ENCODE measurements at regions of chr11 and their contacts with region 1.

Region 1: DNA sequence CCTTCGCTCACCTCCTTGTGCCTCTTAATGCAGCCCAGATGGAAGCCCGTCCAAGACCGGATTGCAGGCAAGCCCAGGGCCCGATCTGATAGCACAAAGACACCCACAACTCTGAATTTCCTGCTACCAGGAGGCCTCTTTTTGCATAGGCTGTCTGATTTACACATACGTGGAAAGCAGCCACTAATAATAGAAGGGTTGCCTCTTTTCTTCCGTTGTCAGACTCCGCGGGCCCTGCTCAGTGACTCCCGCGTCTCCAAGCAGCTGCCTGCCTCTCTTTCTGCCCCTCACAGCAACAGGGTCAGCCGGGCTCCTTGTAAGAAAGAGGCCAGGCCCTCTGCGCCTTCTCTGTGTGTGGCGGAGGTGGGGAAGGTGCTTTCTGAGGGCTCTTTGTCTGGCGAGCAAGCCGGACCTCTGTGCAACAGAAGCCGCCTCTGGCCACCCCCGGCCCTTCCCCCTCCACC is 26.7 kb downstream of the FLI1 start:
- DNase-seq: peak; percentile 57
- H3K4me3 Mint-ChIP-seq: peak overlapping the region; percentile 66
- H3K27ac Mint-ChIP-seq: peak overlapping the region; percentile 83
- H3K4me1 Mint-ChIP-seq: peaks cover 99% of the 10 kb centered on the region
- H3K27me3 Mint-ChIP-seq: no peaks in the 10 kb centered on the region

Region 2: DNA sequence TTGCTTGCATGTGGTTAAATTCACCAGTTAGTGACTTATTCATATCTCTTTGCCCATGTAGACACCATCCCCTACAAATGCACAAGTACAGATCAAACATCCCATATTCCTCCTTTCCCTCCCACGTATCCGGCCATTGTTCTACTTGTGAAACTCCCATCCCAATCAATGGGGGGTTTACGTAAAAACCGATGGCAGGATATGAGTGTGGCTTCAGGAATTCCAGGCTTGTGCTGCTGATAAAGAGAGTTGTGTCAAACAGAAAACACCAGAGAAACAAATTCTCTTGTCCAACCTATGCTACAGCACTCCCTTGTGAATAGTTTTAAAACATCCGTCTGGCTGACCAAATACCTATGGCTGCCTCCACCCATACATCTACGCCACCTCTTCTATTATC is 11.2 kb before region 1 on chr11:
- CTCF ChIA-PET with region 1: no interaction called
- POLR2A ChIA-PET with region 1: interaction called, 17 read pairs
- DNase-seq: no peak
- H3K4me3 Mint-ChIP-seq: no peak overlapping the region
- H3K27ac Mint-ChIP-seq: no peak overlapping the region
- H3K4me1 Mint-ChIP-seq: peaks cover 81% of the 10 kb centered on the region
- H3K27me3 Mint-ChIP-seq: no peaks in the 10 kb centered on the region

Region 3: DNA sequence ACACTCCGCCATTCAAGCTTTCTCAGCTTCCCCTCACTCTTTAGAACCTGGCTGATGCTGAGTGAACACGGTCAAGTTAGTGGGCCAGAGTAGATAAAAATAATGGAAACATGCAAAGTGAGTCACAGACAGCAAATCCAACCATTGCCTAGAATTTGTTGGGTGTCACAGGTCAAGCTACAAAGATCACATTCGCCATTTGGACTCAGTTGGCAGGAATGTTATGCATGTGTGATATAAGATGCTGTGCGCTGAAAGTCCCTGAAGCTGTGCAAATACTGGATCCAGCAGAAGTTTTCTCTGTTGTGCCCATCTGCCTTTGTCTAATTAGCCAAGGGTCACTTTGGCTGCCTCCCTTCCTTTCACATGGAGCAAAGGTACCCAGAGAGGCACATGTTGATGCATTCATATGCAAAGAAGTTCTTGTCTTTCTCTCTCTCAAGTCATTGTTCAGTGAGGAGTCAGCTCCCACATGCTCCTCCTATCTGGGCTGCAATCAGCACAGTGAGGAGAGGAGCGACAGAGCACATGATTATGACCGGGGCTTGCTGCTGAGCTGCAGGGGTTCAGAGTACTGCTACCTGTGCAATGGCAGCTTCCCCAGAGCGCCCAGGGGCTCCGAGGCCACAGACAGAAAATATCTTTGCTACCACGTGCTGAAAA is 13.0 kb after region 1 on chr11:
- CTCF ChIA-PET with region 1: interaction called, 14 read pairs
- POLR2A ChIA-PET with region 1: interaction called, 104 read pairs
- DNase-seq: peak; percentile 62
- H3K4me3 Mint-ChIP-seq: peak overlapping the region; percentile 55
- H3K27ac Mint-ChIP-seq: peak overlapping the region; percentile 95
- H3K4me1 Mint-ChIP-seq: peaks cover 99% of the 10 kb centered on the region
- H3K27me3 Mint-ChIP-seq: no peaks in the 10 kb centered on the region

Region 4: DNA sequence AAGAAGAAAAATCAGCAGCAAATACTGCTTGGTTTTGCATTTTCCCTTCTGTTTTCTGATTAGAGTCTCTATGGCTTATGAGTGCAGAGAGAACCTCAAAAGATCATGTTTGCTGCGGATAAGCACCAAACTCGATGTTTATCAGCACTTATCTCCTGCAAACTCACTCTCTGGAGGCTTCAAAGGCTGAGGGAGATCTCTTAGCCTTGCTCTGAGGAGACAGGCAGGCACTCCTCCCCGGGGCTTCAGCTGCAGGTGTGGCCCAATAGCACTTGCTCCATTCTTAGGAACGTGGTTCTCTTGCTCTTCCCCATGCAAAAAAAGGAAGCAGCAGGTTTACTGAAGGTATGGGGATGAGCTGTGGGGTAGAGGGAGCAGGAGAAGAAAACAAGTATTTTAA is 18.4 kb after region 1 on chr11:
- CTCF ChIA-PET with region 1: interaction called, 14 read pairs
- POLR2A ChIA-PET with region 1: interaction called, 104 read pairs
- DNase-seq: no peak
- H3K4me3 Mint-ChIP-seq: peak overlapping the region; percentile 19
- H3K27ac Mint-ChIP-seq: peak overlapping the region; percentile 77
- H3K4me1 Mint-ChIP-seq: peaks cover 71% of the 10 kb centered on the region
- H3K27me3 Mint-ChIP-seq: no peaks in the 10 kb centered on the region

Region 5: DNA sequence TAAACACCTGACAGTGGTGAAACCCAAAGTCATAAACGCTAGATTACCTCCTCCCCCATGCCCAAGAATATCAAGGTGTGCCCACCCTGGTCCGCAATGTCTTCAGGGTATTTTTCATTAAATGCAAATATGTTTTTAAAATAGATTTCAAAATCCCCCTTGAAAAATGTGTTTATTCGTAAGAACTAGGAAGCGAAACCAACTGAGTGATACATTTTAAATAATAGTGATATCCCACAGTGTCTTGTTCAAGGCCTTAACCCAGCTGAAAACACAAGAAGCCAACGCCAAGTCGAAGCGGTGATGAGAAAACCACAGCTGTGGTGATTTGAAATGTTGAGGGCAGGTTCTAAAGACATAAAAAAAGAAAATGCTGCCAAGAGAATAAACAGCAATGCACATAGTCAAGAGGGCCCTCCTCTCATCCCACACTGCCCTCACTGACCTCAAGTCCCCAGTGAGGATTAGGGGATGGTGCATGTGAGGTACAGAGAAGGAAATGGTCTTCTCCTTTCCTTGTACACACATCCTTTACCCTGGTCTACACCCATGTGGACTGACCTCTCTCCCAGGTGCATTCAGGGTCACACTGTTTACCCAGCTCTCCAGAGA is 121.0 kb after region 1 on chr11:
- CTCF ChIA-PET with region 1: no interaction called
- POLR2A ChIA-PET with region 1: no interaction called
- DNase-seq: no peak
- H3K4me3 Mint-ChIP-seq: no peak overlapping the region
- H3K27ac Mint-ChIP-seq: no peak overlapping the region
- H3K4me1 Mint-ChIP-seq: peaks cover 58% of the 10 kb centered on the region
- H3K27me3 Mint-ChIP-seq: no peaks in the 10 kb centered on the region

Region 6: DNA sequence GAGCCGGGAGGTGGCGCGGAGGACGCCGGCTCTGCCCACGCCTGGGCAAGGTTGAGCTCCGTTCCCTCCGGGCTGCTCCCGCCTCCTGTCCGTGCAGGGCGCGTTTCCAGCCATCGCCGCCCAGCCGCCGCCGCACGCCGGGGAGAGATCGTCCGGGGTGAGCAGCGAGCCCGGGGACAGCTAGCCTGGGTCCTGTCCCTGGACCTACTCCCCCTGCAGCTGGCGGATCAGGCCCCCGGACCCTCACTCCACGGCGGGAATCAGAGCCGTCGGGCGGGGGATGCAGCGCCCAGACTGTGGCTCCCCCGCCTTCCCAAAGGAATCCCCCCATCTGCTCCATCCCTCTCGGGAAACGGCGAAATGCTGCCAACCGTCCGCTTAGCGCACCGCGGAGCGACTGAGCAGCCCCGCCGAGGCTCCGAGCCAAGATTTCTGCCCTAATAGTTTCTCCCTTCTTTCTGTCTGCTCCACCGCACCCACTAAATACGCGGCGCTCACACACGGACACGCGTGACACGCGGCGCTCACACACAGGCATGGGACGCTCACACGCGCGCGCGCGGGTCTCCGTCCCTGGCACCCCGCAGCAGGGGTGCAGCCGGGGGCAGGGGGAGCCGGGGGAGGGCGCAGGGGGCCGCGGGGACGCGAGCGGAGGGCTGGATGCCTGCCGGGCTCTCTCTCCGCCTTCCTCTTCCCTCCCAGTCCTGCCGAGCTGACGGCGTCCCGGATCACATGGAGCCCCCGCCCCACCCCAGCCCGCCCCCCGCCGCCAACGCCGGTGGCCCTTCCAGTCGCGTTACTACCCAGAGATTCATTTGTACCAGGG is 170.2 kb after region 1 on chr11 and contains the start of gene KCNJ5:
- CTCF ChIA-PET with region 1: no interaction called
- POLR2A ChIA-PET with region 1: no interaction called
- DNase-seq: no peak
- H3K4me3 Mint-ChIP-seq: peak within 1 kb of the TSS; percentile 36
- H3K27ac Mint-ChIP-seq: no peak within 1 kb of the TSS
- H3K4me1 Mint-ChIP-seq: peaks cover 17% of the 10 kb centered on the region
- H3K27me3 Mint-ChIP-seq: peaks cover 66% of the 10 kb centered on the region
- total RNA-seq, gene KCNJ5: not detected